ENCODE measurements at regions of chr7 and their contacts with region 1.

Region 1: DNA sequence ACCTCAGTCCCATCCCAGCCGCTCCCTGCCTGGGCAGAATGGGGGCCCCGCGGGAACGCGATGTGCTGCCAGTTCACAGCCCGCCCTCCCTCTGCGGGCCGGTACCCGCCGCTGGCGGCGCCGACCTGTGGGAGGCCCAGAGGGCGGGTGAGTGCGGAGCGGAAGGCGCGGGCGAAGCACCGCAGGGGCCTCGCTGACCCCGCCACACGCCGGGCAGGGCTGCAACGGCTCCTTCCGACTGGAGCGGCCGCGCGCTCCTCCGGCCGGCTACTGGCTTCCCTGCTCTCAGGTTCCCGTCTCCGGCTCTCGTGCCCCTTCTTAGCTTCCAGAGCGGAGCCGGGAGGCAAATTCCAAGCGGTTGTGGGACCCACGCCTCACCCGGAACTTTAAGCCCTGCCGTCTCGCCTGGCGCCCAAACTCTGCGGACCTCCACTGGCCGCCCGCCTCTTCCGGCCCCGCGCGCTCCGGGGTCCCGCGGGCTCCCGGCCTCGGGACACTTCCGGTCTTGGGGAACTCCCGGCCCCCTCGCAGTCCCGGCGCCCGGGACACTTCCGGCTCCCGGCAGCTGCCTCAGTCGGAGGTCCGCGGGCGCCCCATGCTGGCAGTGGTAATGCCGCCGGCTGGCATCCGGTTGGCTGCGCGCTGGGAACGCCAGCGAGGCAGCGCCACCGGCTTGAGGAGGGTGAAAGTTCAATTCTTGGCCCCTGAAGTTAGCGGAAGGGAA is at the start of gene CYREN:
- DNase-seq: peak; percentile 92
- H3K4me3 ChIP-seq: peak within 1 kb of the TSS; percentile 47 to 75 (median 66)
- H3K27ac ChIP-seq: peak within 1 kb of the TSS; percentile 63
- H3K4me1 ChIP-seq: peaks cover 23% of the 10 kb centered on the region
- H3K27me3 ChIP-seq: no peaks in the 10 kb centered on the region
- CTCF ChIP-seq: peak; percentile 69 to 78
- POLR2A ChIP-seq: peak; percentile 13
- total RNA-seq, gene CYREN: 26.8 and 30.8 TPM in 2 replicates

Region 2: DNA sequence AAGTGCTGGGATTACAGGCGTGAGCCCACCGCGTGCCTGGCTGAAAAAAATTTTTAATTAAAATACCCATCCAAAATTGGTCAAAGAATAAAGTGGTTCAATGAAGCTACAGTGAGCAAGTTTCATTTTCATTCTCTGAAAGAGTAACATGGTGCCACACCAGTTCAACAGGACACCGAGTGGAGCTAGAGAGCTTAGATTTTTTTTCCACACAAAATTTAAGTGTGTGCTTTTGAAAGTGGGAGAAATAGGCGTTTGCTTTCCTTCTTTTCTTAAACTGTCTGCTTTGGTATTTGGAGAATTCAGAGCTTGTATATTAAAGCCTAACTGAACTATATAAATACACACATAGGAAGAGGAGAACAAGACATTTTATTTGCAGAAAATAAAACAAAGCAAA is 480.4 kb before region 1 on chr7:
- CTCF ChIA-PET with region 1: interaction called, 6 read pairs
- POLR2A ChIA-PET with region 1: no interaction called
- dilution Hi-C with region 1: no loop called
- intact Hi-C with region 1: loop called (anchors 10 kb)
- DNase-seq: peak; percentile 56
- H3K4me3 ChIP-seq: no peak overlapping the region
- H3K27ac ChIP-seq: no peak overlapping the region
- H3K4me1 ChIP-seq: no peaks in the 10 kb centered on the region
- H3K27me3 ChIP-seq: peaks cover 0 to 3% of the 10 kb centered on the region in 2 experiments
- CTCF ChIP-seq: peak in 1 of 2 donors; percentile 39
- POLR2A ChIP-seq: no peak

Region 3: DNA sequence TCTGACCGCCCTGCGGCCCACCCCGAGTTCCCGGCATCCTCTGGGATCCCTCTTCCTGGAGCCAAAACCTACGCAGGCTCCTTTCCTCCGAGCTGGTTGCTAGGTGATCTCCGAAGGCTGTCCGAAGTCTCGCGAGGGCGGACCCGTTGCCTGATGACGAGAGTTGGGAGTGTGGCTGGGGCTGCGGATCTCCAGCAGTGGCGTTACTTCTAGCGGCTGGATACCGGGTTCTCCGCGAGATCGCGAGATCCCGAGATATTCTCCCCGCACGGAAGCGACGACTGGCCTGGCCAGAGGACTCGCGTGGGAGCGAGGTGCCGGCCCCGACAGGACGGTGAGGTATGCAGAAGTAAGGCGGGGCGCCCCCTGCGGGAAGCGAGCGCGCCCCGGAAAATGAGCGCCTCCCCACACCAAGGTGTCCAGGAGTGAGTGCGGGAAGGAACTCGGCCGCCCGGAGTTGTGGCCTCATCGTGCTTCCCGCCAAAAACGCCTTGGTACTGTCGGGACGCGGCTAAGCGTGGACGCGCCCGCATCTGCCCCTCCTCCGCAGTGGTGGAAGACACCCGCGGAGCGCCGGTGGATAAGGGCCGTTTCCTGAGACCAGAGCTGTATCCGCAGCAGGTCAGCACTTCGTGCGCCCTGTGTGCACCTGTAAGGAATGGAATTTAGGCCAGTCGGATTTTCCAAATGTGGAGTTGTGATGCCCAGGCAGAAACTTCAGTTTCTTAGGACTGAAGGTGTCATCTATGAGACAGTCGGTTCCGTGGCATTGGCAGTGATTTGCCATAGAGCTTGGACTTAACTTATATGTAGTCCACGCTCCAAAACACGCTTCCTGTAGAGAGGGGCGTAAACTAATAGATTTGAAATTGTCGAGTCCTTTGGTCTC is 183.8 kb before region 1 on chr7 and contains the start of gene AGBL3:
- CTCF ChIA-PET with region 1: interaction called, 45 read pairs
- POLR2A ChIA-PET with region 1: no interaction called
- dilution Hi-C with region 1: no loop called
- intact Hi-C with region 1: loop called (anchors 1 kb)
- DNase-seq: peak; percentile 95
- H3K4me3 ChIP-seq: peak within 1 kb of the TSS; percentile 73 to 99 (median 78)
- H3K27ac ChIP-seq: peak within 1 kb of the TSS; percentile 81
- H3K4me1 ChIP-seq: peaks cover 24% of the 10 kb centered on the region
- H3K27me3 ChIP-seq: no peaks in the 10 kb centered on the region
- CTCF ChIP-seq: peak; percentile 49 to 67
- POLR2A ChIP-seq: peak; percentile 74
- total RNA-seq, gene AGBL3: 3.2 and 3.4 TPM in 2 replicates

Region 4: GRCh38 chr7:135083005-135083404 is 87.4 kb before region 1 on chr7:
- CTCF ChIA-PET with region 1: no interaction called
- POLR2A ChIA-PET with region 1: no interaction called
- dilution Hi-C with region 1: no loop called
- intact Hi-C with region 1: no loop called
- DNase-seq: no peak
- H3K4me3 ChIP-seq: no peak overlapping the region
- H3K27ac ChIP-seq: no peak overlapping the region
- H3K4me1 ChIP-seq: no peaks in the 10 kb centered on the region
- H3K27me3 ChIP-seq: no peaks in the 10 kb centered on the region
- CTCF ChIP-seq: no peak
- POLR2A ChIP-seq: no peak

Region 5: GRCh38 chr7:135160098-135160857 is 10.2 kb before region 1 on chr7:
- CTCF ChIA-PET with region 1: interaction called, 22 read pairs
- POLR2A ChIA-PET with region 1: interaction called, 4 read pairs
- dilution Hi-C with region 1: no loop called
- intact Hi-C with region 1: no loop called
- DNase-seq: peak; percentile 95
- H3K4me3 ChIP-seq: peak overlapping the region in 1 of 3 experiments; percentile 23
- H3K27ac ChIP-seq: peak overlapping the region; percentile 68
- H3K4me1 ChIP-seq: peaks cover 33% of the 10 kb centered on the region
- H3K27me3 ChIP-seq: no peaks in the 10 kb centered on the region
- CTCF ChIP-seq: no peak
- POLR2A ChIP-seq: peak; percentile 16

Region 6: DNA sequence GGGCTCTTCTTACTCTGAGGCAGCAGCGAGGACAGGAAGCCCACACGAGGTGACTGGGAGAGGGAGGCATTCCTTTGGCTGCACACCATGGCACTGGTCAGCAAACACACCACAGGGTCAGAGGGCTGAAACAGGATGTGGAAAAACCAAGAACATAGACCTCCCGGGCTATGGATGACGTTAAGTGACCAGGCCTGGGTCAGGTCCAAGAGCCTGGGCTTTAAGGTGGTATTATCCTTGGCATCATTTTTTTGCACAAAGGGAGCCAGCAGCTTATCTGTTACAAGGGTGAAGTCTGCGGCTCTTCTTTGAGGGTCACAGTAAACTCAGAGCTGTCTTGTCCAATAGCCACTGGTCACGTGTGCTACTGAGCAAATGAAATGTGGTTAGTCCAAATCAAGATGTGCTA is 33.9 kb after region 1 on chr7:
- CTCF ChIA-PET with region 1: no interaction called
- POLR2A ChIA-PET with region 1: no interaction called
- dilution Hi-C with region 1: no loop called
- intact Hi-C with region 1: no loop called
- DNase-seq: peak; percentile 22
- H3K4me3 ChIP-seq: no peak overlapping the region
- H3K27ac ChIP-seq: no peak overlapping the region
- H3K4me1 ChIP-seq: no peaks in the 10 kb centered on the region
- H3K27me3 ChIP-seq: no peaks in the 10 kb centered on the region
- CTCF ChIP-seq: no peak
- POLR2A ChIP-seq: no peak

Region 7: DNA sequence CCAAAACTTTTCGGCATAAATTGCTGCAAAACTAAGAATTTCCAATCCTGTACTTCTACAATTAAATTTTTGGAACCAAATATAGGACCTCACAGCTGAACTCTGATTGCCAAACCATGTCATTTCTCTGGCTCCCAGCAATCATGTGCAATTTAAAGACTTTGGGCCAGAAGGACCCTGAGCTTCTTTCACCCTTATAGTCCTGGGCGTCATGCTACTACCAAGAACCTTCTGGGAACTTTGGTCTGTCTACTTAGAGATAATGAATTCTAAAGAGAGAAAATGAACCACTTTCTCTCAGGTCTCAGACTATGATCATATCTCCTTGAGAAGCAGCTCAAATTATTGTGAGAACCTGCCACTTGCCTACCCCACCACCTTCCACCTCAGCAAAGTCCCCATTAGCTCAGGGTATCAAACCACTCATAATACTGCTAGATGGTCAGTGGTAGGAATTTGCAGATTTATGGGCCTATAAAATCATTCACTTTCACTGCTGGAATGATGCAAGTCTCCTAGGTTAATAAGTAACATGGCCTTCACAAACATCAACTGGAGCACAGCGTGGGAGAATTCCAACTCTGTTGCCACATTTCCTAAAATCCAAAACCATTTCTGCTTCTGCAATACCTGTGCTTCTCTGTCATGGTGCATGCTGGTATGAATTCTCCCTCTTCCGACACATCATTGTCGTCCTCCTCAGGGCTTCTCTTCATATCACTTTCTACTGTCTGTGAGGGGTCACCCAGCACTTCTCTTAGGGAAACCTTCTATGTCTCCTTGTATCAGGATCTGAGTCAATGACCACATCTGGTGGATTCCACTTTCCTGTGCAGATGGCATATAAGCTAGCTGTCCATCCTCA is 47.4 kb after region 1 on chr7:
- CTCF ChIA-PET with region 1: no interaction called
- POLR2A ChIA-PET with region 1: no interaction called
- dilution Hi-C with region 1: no loop called
- intact Hi-C with region 1: no loop called
- DNase-seq: no peak
- H3K4me3 ChIP-seq: no peak overlapping the region
- H3K27ac ChIP-seq: no peak overlapping the region
- H3K4me1 ChIP-seq: no peaks in the 10 kb centered on the region
- H3K27me3 ChIP-seq: peaks cover 0 to 13% of the 10 kb centered on the region in 2 experiments
- CTCF ChIP-seq: no peak
- POLR2A ChIP-seq: no peak

Region 8: GRCh38 chr7:135281363-135281949 is 111.0 kb after region 1 on chr7:
- CTCF ChIA-PET with region 1: no interaction called
- POLR2A ChIA-PET with region 1: no interaction called
- dilution Hi-C with region 1: no loop called
- intact Hi-C with region 1: no loop called
- DNase-seq: peak; percentile 87
- H3K4me3 ChIP-seq: no peak overlapping the region
- H3K27ac ChIP-seq: peak overlapping the region; percentile 10
- H3K4me1 ChIP-seq: peaks cover 15% of the 10 kb centered on the region
- H3K27me3 ChIP-seq: no peaks in the 10 kb centered on the region
- CTCF ChIP-seq: peak; percentile 94 to 96
- POLR2A ChIP-seq: no peak

Measured in endothelial cell of umbilical vein (primary cell).